HepG2 (cell line): ENCODE measurements at regions of chr10 and their contacts with region 1.

Region 1: DNA sequence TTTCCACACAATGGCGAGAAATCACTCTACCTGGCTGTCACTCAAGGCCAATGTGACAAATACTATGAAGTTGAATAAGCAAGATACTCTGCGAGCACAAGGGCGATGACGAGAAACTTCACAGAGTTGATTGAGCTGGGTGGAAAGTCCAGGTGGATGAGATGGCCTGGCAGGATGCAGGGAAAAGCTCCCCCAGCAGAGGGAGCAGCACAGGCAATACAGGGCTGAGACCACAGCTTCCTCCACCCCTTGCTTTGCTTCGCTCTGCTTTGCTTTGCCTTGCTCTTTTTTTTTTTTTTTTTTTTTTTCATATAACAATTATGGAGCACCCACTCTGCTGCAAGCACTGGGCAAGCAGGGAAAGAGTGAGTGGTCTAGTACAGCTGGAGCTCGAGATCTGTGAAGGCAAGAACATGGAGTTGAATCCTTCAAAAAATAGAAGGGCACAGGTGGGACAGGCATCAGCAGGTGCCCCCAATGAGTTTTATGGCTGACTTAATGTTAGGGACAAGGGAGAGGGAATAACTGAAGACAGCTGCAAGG is 88.3 kb downstream of the CABCOCO1 start:
- DNase-seq: peak; percentile 74
- ATAC-seq: peak; percentile 99
- H3K4me3 ChIP-seq: peak overlapping the region in 1 of 3 experiments; percentile 34; a peak in 1 of 6 replicates
- H3K27ac ChIP-seq: no peak overlapping the region
- H3K4me1 ChIP-seq: peaks cover 48% of the 10 kb centered on the region
- H3K27me3 ChIP-seq: no peaks in the 10 kb centered on the region
- CTCF ChIP-seq: peak; percentile 89
- EP300 ChIP-seq: no peak
- POLR2A ChIP-seq: no peak
- RAD21 ChIP-seq: peak; percentile 56; the same call in 1 of the 2 replicates

Region 2: DNA sequence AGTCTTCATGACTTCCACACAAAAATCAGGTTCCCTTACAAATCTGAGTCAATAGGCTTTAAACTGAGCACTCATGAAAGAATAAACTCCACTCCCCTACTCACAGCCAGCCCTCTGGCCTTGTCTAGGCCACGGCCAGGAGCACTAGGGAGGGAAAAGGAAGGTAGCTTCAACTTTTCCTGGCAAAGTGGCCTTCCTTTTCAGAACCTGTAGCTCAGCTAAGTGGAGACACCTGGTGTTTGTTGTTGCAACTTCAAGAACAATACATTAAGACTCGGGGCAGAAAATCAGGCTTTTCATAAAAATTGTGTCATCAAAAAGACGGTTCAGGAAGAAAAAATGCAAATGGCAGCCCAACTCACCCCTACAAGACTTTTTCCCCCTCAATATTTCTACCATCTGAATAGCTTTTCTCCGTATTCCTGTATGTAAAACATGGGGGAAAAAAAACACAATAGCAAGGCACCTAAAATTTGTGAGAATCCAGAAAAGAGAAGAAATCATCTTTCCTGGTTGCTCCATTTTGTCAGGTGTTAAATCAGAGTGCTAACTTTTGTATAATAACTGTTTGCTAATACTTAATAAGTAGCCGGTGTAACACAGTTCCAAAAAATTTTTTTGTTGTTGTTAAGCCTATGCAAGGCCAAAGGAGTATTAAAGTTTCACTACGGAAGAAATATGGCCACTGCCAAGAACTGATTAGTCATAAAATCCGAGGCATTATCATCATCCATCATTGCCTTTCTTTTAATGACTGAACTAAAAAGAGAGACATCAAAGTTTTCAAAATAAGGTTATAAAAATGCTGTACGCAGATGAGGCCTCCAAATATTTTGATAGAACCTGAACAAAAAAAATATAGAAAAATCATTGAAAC is 84.3 kb after region 1 on chr10:
- CTCF ChIA-PET with region 1: interaction called, 9 read pairs
- POLR2A ChIA-PET with region 1: interaction called, 4 read pairs
- in situ Hi-C with region 1: loop called (anchors 5 kb)
- intact Hi-C with region 1: loop called (anchors 1 kb)
- DNase-seq: peak; percentile 44
- ATAC-seq: peak; percentile 39; the same call in 1 of the 3 replicates
- H3K4me3 ChIP-seq: no peak overlapping the region
- H3K27ac ChIP-seq: no peak overlapping the region
- H3K4me1 ChIP-seq: peaks cover 66% of the 10 kb centered on the region
- H3K27me3 ChIP-seq: no peaks in the 10 kb centered on the region; a peak in 1 of 5 replicates
- CTCF ChIP-seq: peak; percentile 61
- EP300 ChIP-seq: no peak
- POLR2A ChIP-seq: no peak
- RAD21 ChIP-seq: peak; percentile 58

Region 3: DNA sequence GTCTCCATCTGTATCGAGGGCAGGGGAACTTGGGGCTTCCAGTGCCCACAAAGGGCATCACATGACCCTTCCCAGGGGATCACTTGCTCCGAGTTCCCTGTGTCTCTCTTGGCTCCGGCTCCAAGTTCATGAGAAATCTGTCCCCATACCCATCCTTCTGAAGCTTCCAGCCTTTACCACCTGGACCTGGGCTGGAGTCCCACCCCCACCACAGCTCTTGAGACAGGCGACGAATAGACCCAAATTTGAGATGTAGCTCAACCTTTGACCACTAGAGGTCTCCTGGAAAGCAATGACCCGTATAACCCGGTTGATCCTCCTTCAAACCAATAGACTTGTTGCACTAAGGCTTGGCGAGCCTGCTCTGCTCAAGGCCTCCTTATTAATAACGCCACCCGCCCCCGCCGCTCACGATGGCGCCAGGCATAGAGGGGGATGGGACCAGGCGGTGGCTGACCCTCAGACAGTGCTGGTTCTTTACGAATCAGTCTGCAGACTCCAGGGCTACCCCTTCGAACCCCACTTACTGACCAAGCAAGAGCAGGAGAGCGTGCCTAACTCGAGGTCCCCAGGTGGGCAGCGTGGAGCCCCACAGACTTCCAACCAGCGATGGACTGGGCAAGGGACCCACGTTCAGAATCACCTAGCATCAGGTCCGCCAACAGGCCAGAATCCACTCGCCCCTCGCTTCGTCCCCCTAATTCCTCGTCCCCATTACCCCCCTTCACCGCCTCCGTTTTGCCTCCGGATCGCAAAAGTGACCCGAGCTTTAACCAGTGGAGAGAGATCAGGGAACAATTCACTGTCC is 146.1 kb after region 1 on chr10:
- CTCF ChIA-PET with region 1: no interaction called
- POLR2A ChIA-PET with region 1: interaction called, 3 read pairs
- in situ Hi-C with region 1: no loop called
- intact Hi-C with region 1: loop called (anchors 1 kb)
- DNase-seq: peak; percentile 74
- ATAC-seq: peak; percentile 92
- H3K4me3 ChIP-seq: no peak overlapping the region
- H3K27ac ChIP-seq: no peak overlapping the region
- H3K4me1 ChIP-seq: peaks cover 52% of the 10 kb centered on the region
- H3K27me3 ChIP-seq: no peaks in the 10 kb centered on the region; a peak in 1 of 5 replicates
- CTCF ChIP-seq: peak; percentile 80
- EP300 ChIP-seq: no peak
- POLR2A ChIP-seq: no peak
- RAD21 ChIP-seq: peak; percentile 59; the same call in 1 of the 2 replicates